PC-9 (cell line): ENCODE measurements at regions of chr15 and their contacts with region 1.

Region 1: GRCh38 chr15:81265944-81266775 is 57.8 kb downstream of the STARD5 start:
- DNase-seq: peak; percentile 52 to 59
- H3K4me3 ChIP-seq: no peak overlapping the region
- H3K27ac ChIP-seq: no peak overlapping the region
- H3K4me1 ChIP-seq: no peaks in the 10 kb centered on the region
- H3K27me3 ChIP-seq: peaks cover 68% of the 10 kb centered on the region
- CTCF ChIP-seq: peak; percentile 81

Region 2: DNA sequence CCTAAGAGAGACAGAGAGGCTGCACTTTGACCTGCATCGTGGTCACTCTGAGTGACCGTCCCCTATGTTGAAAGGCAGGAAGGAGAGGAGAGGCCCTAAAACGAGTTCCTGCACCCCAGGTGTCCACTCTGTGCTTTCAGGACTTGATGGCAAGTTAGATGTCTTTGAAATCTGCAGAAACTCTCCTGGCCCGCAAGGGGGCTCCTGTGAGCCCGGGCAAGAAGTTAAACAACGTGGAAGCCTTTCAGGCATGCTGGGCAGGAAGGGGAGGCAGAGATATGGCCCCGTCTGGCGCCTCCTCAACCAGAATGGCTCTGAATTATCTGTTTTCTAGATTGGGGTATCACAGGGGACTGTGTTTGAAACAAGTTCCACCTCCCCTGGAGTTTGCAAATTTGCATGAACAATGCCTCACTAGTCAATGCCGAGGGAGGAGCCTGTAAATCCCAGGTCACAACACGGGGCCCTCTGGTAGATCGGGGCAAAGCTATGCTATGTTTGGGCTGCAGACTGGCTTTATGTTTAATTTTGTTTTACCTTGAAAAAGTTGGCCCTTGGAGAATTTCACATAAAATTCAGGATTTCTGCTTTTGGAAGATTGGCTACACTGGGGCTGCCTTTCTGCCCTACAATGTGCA is 1023.9 kb before region 1 on chr15:
- CTCF ChIA-PET with region 1: no interaction called
- POLR2A ChIA-PET with region 1: no interaction called
- intact Hi-C with region 1: loop called (anchors 5 kb)
- DNase-seq: no peak
- H3K4me3 ChIP-seq: no peak overlapping the region
- H3K27ac ChIP-seq: no peak overlapping the region
- H3K4me1 ChIP-seq: no peaks in the 10 kb centered on the region
- H3K27me3 ChIP-seq: peaks cover 27% of the 10 kb centered on the region
- CTCF ChIP-seq: peak; percentile 59

Region 3: GRCh38 chr15:80567721-80568157 is 698.4 kb before region 1 on chr15:
- CTCF ChIA-PET with region 1: interaction called, 3 read pairs
- POLR2A ChIA-PET with region 1: no interaction called
- intact Hi-C with region 1: loop called (anchors 10 kb)
- DNase-seq: peak; percentile 54 to 66
- H3K4me3 ChIP-seq: no peak overlapping the region
- H3K27ac ChIP-seq: no peak overlapping the region
- H3K4me1 ChIP-seq: 0 out of 2 replicates have a peak, but pooled peaks cover 4% of the 10 kb centered on the region
- H3K27me3 ChIP-seq: no peaks in the 10 kb centered on the region
- CTCF ChIP-seq: peak; percentile 80

Region 4: DNA sequence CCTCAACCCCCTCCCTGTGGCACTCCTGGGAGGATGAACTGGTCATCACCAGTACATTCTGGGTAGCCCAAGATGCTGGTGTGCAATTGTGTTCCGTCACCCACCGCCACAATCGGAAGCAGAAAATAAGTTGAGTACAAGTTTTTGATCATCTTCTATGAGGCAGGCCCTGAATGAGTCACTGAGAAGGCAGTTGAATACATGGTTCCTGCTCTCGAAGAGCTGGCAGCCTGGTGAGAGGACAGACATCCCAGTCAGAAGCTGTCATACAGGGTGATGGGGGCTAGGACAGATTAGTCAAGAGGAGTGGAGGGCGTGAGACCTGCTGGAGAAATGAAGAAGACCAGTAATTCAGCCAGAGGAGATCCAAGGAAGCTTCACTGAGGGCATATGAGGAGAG is 480.8 kb before region 1 on chr15:
- CTCF ChIA-PET with region 1: no interaction called
- POLR2A ChIA-PET with region 1: no interaction called
- intact Hi-C with region 1: loop called (anchors 2 kb)
- DNase-seq: no peak
- H3K4me3 ChIP-seq: no peak overlapping the region
- H3K27ac ChIP-seq: no peak overlapping the region
- H3K4me1 ChIP-seq: peaks cover 17% of the 10 kb centered on the region
- H3K27me3 ChIP-seq: no peaks in the 10 kb centered on the region
- CTCF ChIP-seq: no peak

Region 5: DNA sequence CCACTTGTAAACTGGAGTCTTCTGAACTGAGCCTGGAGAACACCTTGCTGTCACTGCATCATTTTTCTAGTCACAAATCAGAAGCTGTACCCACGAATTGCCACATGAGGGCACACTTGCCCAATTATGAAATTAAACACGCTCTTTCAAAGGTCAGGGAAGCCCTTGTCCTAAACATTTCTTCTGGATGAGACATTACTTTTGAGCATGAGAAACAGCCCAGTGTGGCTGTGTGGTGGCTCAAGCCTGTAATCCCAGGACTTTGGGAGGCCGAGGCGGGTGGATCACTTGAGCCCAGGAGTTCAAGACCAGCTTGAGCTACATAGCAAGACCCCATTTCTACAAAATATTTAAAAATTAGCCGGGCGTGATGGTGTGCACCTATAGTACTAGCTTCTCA is 159.6 kb before region 1 on chr15:
- CTCF ChIA-PET with region 1: interaction called, 18 read pairs
- POLR2A ChIA-PET with region 1: no interaction called
- intact Hi-C with region 1: loop called (anchors 1 kb)
- DNase-seq: peak; percentile 48
- H3K4me3 ChIP-seq: no peak overlapping the region
- H3K27ac ChIP-seq: no peak overlapping the region
- H3K4me1 ChIP-seq: no peaks in the 10 kb centered on the region
- H3K27me3 ChIP-seq: peaks cover 17% of the 10 kb centered on the region; the same call in 1 of the 2 replicates
- CTCF ChIP-seq: peak; percentile 78

Region 6: DNA sequence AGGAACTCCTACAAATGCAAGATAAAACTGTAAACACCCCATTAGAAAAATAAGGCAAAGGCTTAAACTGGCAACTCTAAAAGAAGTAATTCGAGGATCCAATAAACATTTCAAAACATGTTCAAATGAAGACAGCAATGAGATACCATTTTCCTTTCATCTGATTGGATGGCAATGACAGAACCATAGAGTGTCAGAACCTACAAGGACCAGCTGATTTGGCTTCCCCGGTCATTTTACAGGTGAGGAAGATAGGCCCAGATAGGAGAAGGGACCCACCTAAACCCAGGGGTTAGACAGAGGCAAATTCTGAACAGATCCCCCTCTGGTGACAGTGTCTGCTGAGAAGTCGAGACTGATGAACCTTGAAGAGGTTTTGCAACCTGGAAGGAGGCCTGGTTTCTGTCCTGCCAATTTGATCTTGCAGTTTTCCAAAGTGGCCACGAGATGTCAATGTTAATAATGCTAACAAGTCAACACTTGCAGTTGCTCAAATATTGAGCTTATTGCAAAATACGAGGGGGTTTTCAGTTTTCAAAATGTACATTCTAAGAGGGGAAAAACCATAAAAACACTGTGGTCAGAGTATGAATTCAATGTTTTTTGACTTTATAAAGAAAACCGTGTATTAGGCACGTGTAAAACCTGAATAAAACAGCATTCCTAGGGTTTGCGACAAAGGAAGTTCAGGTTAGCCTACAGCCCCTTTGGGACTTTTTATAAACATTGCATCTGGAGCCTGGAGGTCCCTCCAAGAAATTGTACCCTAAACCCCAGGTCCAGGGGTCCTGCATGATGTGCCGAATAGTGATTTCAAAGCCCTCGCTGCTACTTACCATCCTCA is 110.6 kb before region 1 on chr15:
- CTCF ChIA-PET with region 1: interaction called, 8 read pairs
- POLR2A ChIA-PET with region 1: no interaction called
- intact Hi-C with region 1: loop called (anchors 5 kb)
- DNase-seq: no peak
- H3K4me3 ChIP-seq: no peak overlapping the region
- H3K27ac ChIP-seq: no peak overlapping the region
- H3K4me1 ChIP-seq: no peaks in the 10 kb centered on the region
- H3K27me3 ChIP-seq: peaks cover 25% of the 10 kb centered on the region
- CTCF ChIP-seq: peak; percentile 60